ENCODE measurements at regions of chr7 and their contacts with region 1.

Region 1: DNA sequence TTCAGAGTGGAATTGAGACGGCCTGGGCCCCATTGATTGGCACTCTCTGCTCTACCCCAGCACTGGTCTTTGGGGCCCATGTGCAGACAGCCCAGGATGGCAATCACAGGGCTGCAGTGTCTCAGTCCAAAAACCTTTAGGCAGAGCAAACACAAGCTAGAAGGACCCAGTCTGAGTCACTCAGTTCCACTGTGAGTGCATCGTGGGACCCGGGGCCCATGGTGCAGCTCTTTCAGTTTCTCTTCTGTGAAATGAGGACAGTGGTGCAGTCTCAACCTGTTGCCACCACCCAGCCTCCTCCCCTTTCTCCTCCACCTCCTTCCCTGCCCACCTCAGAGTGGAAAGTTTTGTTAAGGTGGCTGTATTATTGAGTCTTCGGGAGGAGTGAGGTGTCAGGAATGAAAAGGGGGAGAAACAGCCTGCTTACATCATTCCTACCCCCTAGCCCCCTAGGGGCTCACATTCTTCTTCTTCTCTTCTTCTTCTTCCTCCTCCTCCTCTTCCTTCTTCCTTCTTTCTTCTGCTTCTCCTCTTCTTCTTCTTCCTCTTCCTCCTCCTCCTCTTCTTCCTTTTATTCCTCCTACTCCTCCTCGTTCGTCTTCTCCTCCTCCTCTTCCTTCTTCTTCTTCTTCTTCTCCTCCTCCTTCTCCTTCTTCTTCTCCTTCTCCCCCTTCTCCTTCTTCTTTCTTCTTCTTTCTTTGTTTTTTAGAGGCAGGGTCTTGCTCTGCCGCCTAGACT is 19.5 kb upstream of the CARD11 start:
- DNase-seq: peak; percentile 93
- H3K4me3 Mint-ChIP-seq: peak overlapping the region; percentile 74
- H3K27ac Mint-ChIP-seq: peak overlapping the region; percentile 86
- H3K4me1 Mint-ChIP-seq: peaks cover 58% of the 10 kb centered on the region
- H3K27me3 Mint-ChIP-seq: no peaks in the 10 kb centered on the region

Region 2: GRCh38 chr7:2956526-2957368 is 106.4 kb before region 1 on chr7:
- intact Hi-C with region 1: loop called (anchors 5 kb)
- DNase-seq: peak; percentile 80
- H3K4me3 Mint-ChIP-seq: peak overlapping the region; percentile 55
- H3K27ac Mint-ChIP-seq: peak overlapping the region; percentile 87
- H3K4me1 Mint-ChIP-seq: peaks cover 60% of the 10 kb centered on the region
- H3K27me3 Mint-ChIP-seq: no peaks in the 10 kb centered on the region

Region 3: DNA sequence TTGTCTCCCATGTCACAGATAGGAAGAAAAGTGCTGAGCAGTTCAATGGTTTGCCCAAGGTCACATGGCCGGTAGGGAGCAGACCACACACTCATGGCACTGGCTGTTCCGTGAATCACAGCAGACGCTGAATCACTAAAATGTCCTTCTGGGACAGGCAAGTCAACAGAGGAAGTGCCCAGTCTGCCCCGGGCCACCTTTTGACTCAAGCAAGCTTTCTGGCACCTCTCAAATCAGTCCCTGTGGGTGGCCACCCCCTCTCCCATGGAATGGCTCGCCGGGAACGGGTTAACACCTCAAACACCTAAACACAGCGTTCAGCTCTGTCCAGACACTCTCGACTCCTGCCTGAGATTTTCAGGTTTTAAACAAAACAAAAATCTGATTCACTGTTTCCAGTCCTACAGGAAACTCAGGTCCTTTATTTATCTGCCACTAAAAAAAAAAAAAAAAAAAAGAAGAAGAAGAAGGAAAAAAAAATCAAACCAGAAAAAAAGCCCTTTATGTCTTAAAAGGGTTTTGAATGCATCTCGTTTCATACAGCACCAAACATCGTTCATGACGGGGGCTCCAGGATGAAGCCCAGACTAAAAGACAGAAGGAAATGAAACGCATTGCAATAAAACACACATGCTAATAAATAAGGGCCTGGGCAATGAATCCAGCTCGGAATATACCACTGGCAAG is 35.0 kb before region 1 on chr7:
- intact Hi-C with region 1: loop called (anchors 1 kb)
- DNase-seq: peak; percentile 68
- H3K4me3 Mint-ChIP-seq: peak overlapping the region; percentile 66
- H3K27ac Mint-ChIP-seq: peak overlapping the region; percentile 87
- H3K4me1 Mint-ChIP-seq: peaks cover 34% of the 10 kb centered on the region
- H3K27me3 Mint-ChIP-seq: no peaks in the 10 kb centered on the region

Region 4: DNA sequence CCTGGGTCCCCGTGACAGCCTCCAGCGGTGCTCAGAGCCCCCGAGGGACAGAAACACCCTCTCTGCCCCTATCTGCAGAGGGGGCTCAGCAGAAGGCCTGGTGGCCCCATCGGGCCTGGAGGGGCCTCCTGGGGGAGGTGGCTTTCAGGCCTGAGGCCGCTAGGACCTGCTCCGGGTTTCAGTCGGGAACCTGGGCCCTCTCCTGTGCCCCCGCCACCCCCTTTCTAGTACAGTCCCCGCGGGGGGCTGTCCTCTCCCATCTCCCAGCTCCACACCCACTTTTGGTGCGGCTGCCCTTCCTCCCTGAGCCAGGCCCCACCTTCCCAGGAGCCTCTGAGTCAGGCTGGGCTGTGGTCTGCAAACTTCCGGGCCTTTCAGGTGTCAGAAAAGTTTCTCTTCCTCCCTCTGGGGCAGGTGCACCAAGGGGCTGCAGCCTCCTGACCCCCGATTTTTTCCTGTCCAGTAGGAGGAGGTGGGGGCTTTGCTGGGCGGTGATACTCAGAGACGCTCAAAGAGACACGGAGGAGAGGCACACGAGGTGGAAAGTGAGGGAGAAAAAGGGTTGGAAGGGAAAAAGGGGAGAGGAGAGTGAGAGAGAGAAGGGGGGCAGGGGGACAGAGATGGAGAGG is 20.2 kb before region 1 on chr7:
- intact Hi-C with region 1: loop called (anchors 1 kb)
- DNase-seq: peak; percentile 91
- H3K4me3 Mint-ChIP-seq: peak overlapping the region; percentile 96
- H3K27ac Mint-ChIP-seq: peak overlapping the region; percentile 94
- H3K4me1 Mint-ChIP-seq: peaks cover 40% of the 10 kb centered on the region
- H3K27me3 Mint-ChIP-seq: no peaks in the 10 kb centered on the region

Region 5: GRCh38 chr7:3092468-3092867 is 29.3 kb after region 1 on chr7:
- intact Hi-C with region 1: loop called (anchors 1 kb)
- DNase-seq: peak; percentile 93
- H3K4me3 Mint-ChIP-seq: peak overlapping the region; percentile 22
- H3K27ac Mint-ChIP-seq: peak overlapping the region; percentile 86
- H3K4me1 Mint-ChIP-seq: peaks cover 51% of the 10 kb centered on the region
- H3K27me3 Mint-ChIP-seq: no peaks in the 10 kb centered on the region

Region 6: GRCh38 chr7:3106361-3106826 is 43.2 kb after region 1 on chr7:
- intact Hi-C with region 1: loop called (anchors 1 kb)
- DNase-seq: peak; percentile 83
- H3K4me3 Mint-ChIP-seq: peak overlapping the region; percentile 57
- H3K27ac Mint-ChIP-seq: peak overlapping the region; percentile 92
- H3K4me1 Mint-ChIP-seq: peaks cover 71% of the 10 kb centered on the region
- H3K27me3 Mint-ChIP-seq: no peaks in the 10 kb centered on the region

Region 7: GRCh38 chr7:3154912-3155494 is 91.8 kb after region 1 on chr7:
- intact Hi-C with region 1: loop called (anchors 1 kb)
- DNase-seq: peak; percentile 89
- H3K4me3 Mint-ChIP-seq: no peak overlapping the region
- H3K27ac Mint-ChIP-seq: no peak overlapping the region
- H3K4me1 Mint-ChIP-seq: peaks cover 18% of the 10 kb centered on the region
- H3K27me3 Mint-ChIP-seq: peaks cover 4% of the 10 kb centered on the region